Lower lobe of right lung (tissue), 2 donors: ENCODE measurements at regions of chr13 and their contacts with region 1.

Region 1: GRCh38 chr13:99916366-99917103 is 55.0 kb downstream of the ZIC5 start:
- DNase-seq: no peak
- ATAC-seq: peak; percentile 80 to 85
- H3K4me3 ChIP-seq: no peak overlapping the region
- H3K27ac ChIP-seq: no peak overlapping the region
- H3K4me1 ChIP-seq: no peaks in the 10 kb centered on the region
- H3K27me3 ChIP-seq: peaks cover 11% of the 10 kb centered on the region
- CTCF ChIP-seq: peak; percentile 86

Region 2: DNA sequence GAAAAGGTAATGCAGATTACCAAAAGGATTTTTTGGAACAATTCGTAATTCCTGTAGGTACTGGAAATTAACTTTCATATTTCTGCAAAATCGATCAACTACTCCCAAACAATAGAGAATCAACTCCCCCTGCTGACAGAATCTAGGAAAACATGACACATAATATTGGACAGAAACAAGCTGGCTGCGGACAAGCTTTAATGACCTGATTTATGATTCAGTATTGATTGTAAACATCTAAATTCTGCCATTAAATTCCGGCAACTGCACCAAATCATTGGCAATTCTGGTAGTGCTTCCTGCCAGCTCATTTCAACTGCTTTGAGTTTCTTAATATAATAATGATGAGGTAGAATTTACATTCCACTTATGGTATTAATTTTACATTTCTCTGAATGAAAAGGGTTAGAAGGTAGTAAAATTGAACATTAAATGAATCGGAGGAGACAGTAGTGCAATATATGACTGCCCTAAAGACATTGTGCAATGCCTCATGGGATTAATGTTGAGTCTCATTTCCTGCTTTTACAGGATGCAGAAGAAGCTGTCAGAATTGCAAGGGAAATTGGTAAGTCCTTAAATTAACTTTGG is 318.9 kb after region 1 on chr13:
- intact Hi-C with region 1: loop called (anchors 10 kb)
- DNase-seq: no peak
- ATAC-seq: no peak
- H3K4me3 ChIP-seq: no peak overlapping the region
- H3K27ac ChIP-seq: no peak overlapping the region
- H3K4me1 ChIP-seq: peaks cover 17% of the 10 kb centered on the region
- H3K27me3 ChIP-seq: no peaks in the 10 kb centered on the region
- CTCF ChIP-seq: peak; percentile 56